RWPE1 (cell line): ENCODE measurements at regions of chr22 and their contacts with region 1.

Region 1: GRCh38 chr22:41387341-41387740 is 5.6 kb downstream of the TEF start:
- DNase-seq: no peak
- H3K27ac ChIP-seq: peak overlapping the region; percentile 15; the same call in 1 of the 2 replicates
- CTCF ChIP-seq: no peak

Region 2: DNA sequence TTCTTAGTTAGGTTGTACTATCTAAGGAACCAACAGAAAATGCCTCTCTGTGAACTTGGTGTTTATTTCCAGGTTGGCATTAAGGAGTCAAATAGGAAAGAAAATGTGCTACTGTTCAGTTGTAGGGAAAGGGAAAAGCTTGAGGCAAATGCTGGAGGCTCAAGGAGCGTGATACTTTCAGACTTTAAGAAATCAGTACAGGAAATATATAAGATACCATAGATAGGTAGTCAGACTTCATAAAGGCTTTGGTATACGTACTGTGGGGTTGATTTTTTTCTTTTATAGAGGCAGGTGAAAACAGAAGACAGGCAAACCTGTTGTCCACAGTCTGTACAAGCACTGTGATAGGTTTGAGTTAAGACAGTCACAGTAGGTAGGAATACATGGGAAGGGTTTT is 264.2 kb before region 1 on chr22:
- CTCF ChIA-PET with region 1: no interaction called
- POLR2A ChIA-PET with region 1: no interaction called
- DNase-seq: peak; percentile 12
- H3K27ac ChIP-seq: no peak overlapping the region
- CTCF ChIP-seq: no peak

Region 3: DNA sequence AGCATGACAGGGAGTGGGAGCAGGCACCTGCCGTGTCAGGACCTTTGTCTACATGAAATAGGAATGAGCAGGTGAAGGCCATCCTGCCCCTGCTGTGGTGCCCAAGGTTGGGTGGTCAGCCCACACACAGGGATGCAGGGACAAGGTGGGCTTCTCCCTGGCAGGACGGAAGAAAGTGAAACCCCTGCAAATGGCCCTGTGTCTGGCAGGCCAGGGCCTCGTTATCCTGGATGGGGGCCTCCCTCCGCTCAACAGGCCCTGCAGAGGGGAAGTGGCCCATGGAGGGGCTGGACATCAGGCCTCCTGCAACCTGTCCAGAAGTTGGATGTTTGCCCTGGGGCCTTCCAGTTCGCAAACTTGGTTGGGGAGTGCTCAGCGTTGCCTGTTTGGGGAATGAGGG is 44.3 kb after region 1 on chr22:
- CTCF ChIA-PET with region 1: interaction called, 10 read pairs
- POLR2A ChIA-PET with region 1: no interaction called
- DNase-seq: no peak
- H3K27ac ChIP-seq: no peak overlapping the region
- CTCF ChIP-seq: no peak